Heart right ventricle (tissue), 16 donors: ENCODE measurements at regions of chr12 and their contacts with region 1.

Region 1: GRCh38 chr12:80763874-80764273 is 47.2 kb downstream of the MYF5 start:
- DNase-seq: no peak
- ATAC-seq: no peak
- H3K4me3 ChIP-seq: no peak overlapping the region
- H3K27ac ChIP-seq: no peak overlapping the region
- H3K4me1 ChIP-seq: no peaks in the 10 kb centered on the region
- H3K27me3 ChIP-seq: no peaks in the 10 kb centered on the region
- CTCF ChIP-seq: peak; percentile 16 to 67 (median 58)

Region 2: GRCh38 chr12:80406253-80406652 is 357.6 kb before region 1 on chr12:
- intact Hi-C with region 1: loop called in 8 of 10 experiments (anchors 5 to 10 kb)
- DNase-seq: no peak
- ATAC-seq: no peak
- H3K4me3 ChIP-seq: no peak overlapping the region
- H3K27ac ChIP-seq: no peak overlapping the region
- H3K4me1 ChIP-seq: no peaks in the 10 kb centered on the region
- H3K27me3 ChIP-seq: peaks cover 0 to 7% (median 0%) of the 10 kb centered on the region in 7 donors
- CTCF ChIP-seq: no peak

Region 3: GRCh38 chr12:80419644-80420043 is 344.2 kb before region 1 on chr12:
- intact Hi-C with region 1: loop called in 7 of 10 experiments (anchors 5 to 10 kb)
- DNase-seq: no peak
- ATAC-seq: no peak
- H3K4me3 ChIP-seq: no peak overlapping the region
- H3K27ac ChIP-seq: no peak overlapping the region
- H3K4me1 ChIP-seq: no peaks in the 10 kb centered on the region
- H3K27me3 ChIP-seq: peaks cover 0 to 3% (median 0%) of the 10 kb centered on the region in 7 donors
- CTCF ChIP-seq: no peak

Region 4: DNA sequence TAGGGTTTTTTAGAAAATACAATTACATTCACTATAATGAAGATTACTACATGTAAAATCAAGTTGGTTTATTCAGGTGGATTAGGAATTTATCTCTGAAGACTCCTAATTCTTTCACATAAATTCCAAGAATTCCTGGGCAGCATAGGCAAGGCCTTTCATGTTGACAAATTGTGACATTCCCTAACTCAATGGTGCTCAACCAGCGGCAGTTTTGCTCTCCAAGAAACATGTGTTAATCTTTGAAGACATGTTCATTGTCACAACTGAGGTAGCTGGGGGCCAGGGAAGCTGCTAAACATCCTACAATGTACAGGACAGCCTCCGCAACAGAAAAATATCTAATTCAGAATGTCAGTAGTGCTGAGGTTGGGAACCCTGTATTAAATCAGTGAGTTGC is 273.5 kb before region 1 on chr12:
- intact Hi-C with region 1: loop called in 1 of 10 experiments (anchors 10 kb)
- DNase-seq: no peak
- ATAC-seq: no peak
- H3K4me3 ChIP-seq: no peak overlapping the region
- H3K27ac ChIP-seq: no peak overlapping the region
- H3K4me1 ChIP-seq: no peaks in the 10 kb centered on the region
- H3K27me3 ChIP-seq: no peaks in the 10 kb centered on the region
- CTCF ChIP-seq: no peak

Region 5: GRCh38 chr12:80912901-80913694 is 149.2 kb after region 1 on chr12:
- intact Hi-C with region 1: no loop called
- DNase-seq: no peak
- ATAC-seq: peak in 1 of 8 donors; percentile 33
- H3K4me3 ChIP-seq: peak overlapping the region in 5 of 10 donors; percentile 7 to 37 (median 32)
- H3K27ac ChIP-seq: no peak overlapping the region
- H3K4me1 ChIP-seq: peaks cover 0 to 16% (median 0%) of the 10 kb centered on the region in 9 donors
- H3K27me3 ChIP-seq: no peaks in the 10 kb centered on the region
- CTCF ChIP-seq: no peak